Sigmoid colon (tissue), 7 donors: ENCODE measurements at regions of chr9 and their contacts with region 1.

Region 1: DNA sequence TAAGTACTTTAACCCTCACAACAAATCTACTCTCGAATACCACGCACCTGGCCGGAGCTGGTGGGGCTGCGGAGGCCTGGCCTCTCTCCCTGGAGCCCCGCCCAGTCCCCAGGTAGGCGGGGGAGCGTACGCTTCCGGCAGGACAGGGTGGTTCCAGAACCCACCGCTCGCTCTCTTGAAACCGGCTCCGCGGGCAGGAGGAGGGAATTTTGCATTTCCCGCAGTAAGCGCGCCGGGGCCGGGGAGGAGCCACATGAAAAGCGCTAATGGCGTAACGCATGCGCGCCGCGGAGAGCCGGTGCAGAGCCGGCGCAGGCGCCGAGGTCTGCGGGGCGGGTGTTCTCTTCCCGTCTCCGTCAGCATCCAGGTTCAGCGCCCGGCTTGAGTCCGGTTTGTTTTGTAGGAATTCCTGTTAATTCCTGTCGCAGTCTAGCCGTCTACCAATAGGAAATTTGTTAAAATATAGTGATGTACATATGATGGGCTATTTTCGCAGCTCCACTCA is 20.8 kb downstream of the CAVIN4 start:
- DNase-seq: peak; percentile 86
- H3K4me3 ChIP-seq: peak overlapping the region; percentile 22 to 52 (median 46)
- H3K27ac ChIP-seq: peak overlapping the region in 1 of 4 donors; percentile 18
- H3K4me1 ChIP-seq: peaks cover 0 to 16% (median 8%) of the 10 kb centered on the region in 4 donors
- H3K27me3 ChIP-seq: no peaks in the 10 kb centered on the region
- CTCF ChIP-seq: no peak
- EP300 ChIP-seq: no peak
- POLR2A ChIP-seq: no peak

Region 2: GRCh38 chr9:99184475-99185347 is 1414.0 kb before region 1 on chr9:
- intact Hi-C with region 1: loop called (anchors 5 kb)
- DNase-seq: peak; percentile 93
- H3K4me3 ChIP-seq: peak overlapping the region in 3 of 4 donors; percentile 31 to 40 (median 32)
- H3K27ac ChIP-seq: no peak overlapping the region
- H3K4me1 ChIP-seq: peaks cover 0 to 8% (median 7%) of the 10 kb centered on the region in 4 donors
- H3K27me3 ChIP-seq: no peaks in the 10 kb centered on the region
- CTCF ChIP-seq: peak; percentile 77 to 93 (median 84)
- EP300 ChIP-seq: no peak
- POLR2A ChIP-seq: no peak

Region 3: GRCh38 chr9:100028201-100028784 is 570.4 kb before region 1 on chr9:
- intact Hi-C with region 1: loop called (anchors 5 kb)
- DNase-seq: peak; percentile 73
- H3K4me3 ChIP-seq: no peak overlapping the region
- H3K27ac ChIP-seq: no peak overlapping the region
- H3K4me1 ChIP-seq: no peaks in the 10 kb centered on the region
- H3K27me3 ChIP-seq: no peaks in the 10 kb centered on the region
- CTCF ChIP-seq: peak; percentile 37 to 92 (median 77)
- EP300 ChIP-seq: no peak
- POLR2A ChIP-seq: no peak

Region 4: DNA sequence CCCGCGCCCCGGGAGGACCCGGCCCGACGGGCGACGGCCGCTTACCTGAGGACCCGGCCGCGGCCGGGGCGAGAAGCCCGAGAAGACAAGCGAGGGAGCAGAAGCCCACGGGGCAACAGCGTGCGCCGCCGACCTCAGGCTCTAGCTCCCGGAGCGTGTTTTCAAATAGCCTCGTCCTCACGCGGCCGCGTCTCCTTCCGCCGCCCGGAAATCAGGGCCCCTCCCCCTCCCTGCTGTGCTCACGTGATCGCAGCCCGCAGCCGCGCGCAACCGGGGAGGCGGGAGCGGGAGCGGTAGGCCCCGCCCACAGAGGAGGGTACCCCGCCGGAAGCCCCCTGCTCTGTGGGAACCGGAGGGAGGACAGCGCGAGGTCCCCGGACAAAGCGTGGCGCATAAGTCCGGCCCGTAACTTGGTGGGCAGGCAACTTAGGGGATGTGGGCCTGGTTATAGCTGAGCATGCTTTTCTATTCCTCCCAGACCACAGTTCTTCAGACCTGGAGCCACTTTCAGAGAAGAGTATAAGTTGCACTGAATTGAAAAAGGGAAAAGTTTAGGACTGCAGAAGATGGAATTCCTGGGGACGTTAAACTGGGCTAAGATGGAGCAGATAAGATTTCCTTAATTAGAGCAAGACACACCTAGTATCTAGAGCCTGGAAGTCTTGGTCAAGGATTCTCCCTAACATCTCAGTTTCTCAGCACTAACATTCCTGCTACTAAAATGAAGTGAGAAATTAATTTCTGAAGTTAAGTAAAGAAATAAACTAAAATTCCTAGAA is 245.8 kb before region 1 on chr9 and contains the start of gene TEX10:
- intact Hi-C with region 1: loop called (anchors 10 kb)
- DNase-seq: peak; percentile 93
- H3K4me3 ChIP-seq: peak within 1 kb of the TSS; percentile 82 to 99 (median 98)
- H3K27ac ChIP-seq: peak within 1 kb of the TSS; percentile 87 to 91 (median 90)
- H3K4me1 ChIP-seq: peaks cover 0 to 25% (median 12%) of the 10 kb centered on the region in 4 donors
- H3K27me3 ChIP-seq: no peaks in the 10 kb centered on the region
- CTCF ChIP-seq: no peak
- EP300 ChIP-seq: peak in 1 of 4 donors; percentile 57
- POLR2A ChIP-seq: peak in 1 of 2 donors; percentile 37
- total RNA-seq, gene TEX10: 15.0 to 19.6 (median 17.1) TPM

Region 5: GRCh38 chr9:100554935-100555401 is 43.7 kb before region 1 on chr9:
- intact Hi-C with region 1: no loop called
- DNase-seq: no peak
- H3K4me3 ChIP-seq: no peak overlapping the region
- H3K27ac ChIP-seq: no peak overlapping the region
- H3K4me1 ChIP-seq: no peaks in the 10 kb centered on the region
- H3K27me3 ChIP-seq: no peaks in the 10 kb centered on the region
- CTCF ChIP-seq: no peak
- EP300 ChIP-seq: no peak
- POLR2A ChIP-seq: no peak

Region 6: DNA sequence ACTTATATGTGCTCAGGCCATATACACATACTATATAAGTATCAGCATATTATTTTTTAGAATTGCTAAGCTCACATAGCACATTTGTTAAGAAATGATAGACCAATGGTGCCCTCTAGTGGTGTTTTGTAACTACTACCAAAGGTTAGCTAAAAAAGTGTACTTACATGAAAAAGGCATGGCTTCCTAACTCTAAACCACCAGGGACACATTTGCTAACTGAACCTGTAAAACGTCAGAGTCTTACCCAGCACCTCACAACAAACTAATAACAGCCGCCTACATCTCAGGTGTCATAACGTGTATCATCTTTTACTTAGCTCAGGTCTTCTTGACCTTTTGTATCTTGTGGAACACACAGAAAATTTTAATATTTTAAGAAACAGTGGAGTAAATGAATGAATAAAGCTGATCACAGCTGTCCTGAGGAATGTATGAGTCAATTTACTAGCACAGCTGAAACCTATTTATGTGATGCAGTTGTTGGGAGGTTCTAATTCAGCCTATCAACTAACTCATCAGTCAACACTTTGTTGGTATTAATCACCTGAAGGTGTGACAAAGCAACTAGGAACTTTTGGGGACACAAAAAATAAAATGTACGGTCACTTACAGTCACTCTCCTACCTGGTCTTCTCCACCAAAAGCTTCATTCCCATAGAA is 713.2 kb after region 1 on chr9:
- intact Hi-C with region 1: loop called (anchors 2 kb)
- DNase-seq: no peak
- H3K4me3 ChIP-seq: no peak overlapping the region
- H3K27ac ChIP-seq: no peak overlapping the region
- H3K4me1 ChIP-seq: peaks cover 0 to 4% (median 0%) of the 10 kb centered on the region in 4 donors
- H3K27me3 ChIP-seq: no peaks in the 10 kb centered on the region
- CTCF ChIP-seq: peak in 3 of 4 experiments; percentile 40 to 70 (median 54)
- EP300 ChIP-seq: no peak
- POLR2A ChIP-seq: no peak